ENCODE measurements at regions of chr12 and their contacts with region 1.

Region 1: GRCh38 chr12:56189176-56189917 is at the start of gene SMARCC2:
- DNase-seq: peak; percentile 77 to 88
- ATAC-seq: peak; percentile 90
- H3K4me3 ChIP-seq: peak within 1 kb of the TSS; percentile 76 to 90 (median 82)
- H3K27ac ChIP-seq: peak within 1 kb of the TSS; percentile 89 to 94 (median 94)
- H3K4me1 ChIP-seq: peaks cover 16 to 28% of the 10 kb centered on the region in 2 donors
- H3K27me3 ChIP-seq: no peaks in the 10 kb centered on the region
- CTCF ChIP-seq: peak; percentile 74 to 88 (median 84)
- POLR2A ChIP-seq: peak; percentile 20 to 41
- total RNA-seq, gene SMARCC2: 34.1 to 56.9 (median 49.4) TPM

Region 2: GRCh38 chr12:55112378-55112777 is 1077.0 kb before region 1 on chr12:
- in situ Hi-C with region 1: no loop called
- intact Hi-C with region 1: no loop called
- DNase-seq: no peak
- ATAC-seq: no peak
- H3K4me3 ChIP-seq: no peak overlapping the region
- H3K27ac ChIP-seq: no peak overlapping the region
- H3K4me1 ChIP-seq: no peaks in the 10 kb centered on the region
- H3K27me3 ChIP-seq: no peaks in the 10 kb centered on the region
- CTCF ChIP-seq: no peak
- POLR2A ChIP-seq: no peak

Region 3: GRCh38 chr12:56127888-56128669 is 61.3 kb before region 1 on chr12 and contains the start of gene ESYT1:
- in situ Hi-C with region 1: loop called in 3 of 4 experiments (anchors 5 to 10 kb)
- intact Hi-C with region 1: loop called (anchors 1 kb)
- DNase-seq: peak; percentile 99 to 100
- ATAC-seq: peak; percentile 87
- H3K4me3 ChIP-seq: peak within 1 kb of the TSS; percentile 71 to 95 (median 88)
- H3K27ac ChIP-seq: peak within 1 kb of the TSS; percentile 92 to 99 (median 98)
- H3K4me1 ChIP-seq: peaks cover 44 to 51% of the 10 kb centered on the region in 2 donors
- H3K27me3 ChIP-seq: no peaks in the 10 kb centered on the region
- CTCF ChIP-seq: peak in 1 of 5 experiments; percentile 13
- POLR2A ChIP-seq: peak; percentile 98 to 99
- total RNA-seq, gene ESYT1: 45.9 to 77.7 (median 62.1) TPM

Region 4: DNA sequence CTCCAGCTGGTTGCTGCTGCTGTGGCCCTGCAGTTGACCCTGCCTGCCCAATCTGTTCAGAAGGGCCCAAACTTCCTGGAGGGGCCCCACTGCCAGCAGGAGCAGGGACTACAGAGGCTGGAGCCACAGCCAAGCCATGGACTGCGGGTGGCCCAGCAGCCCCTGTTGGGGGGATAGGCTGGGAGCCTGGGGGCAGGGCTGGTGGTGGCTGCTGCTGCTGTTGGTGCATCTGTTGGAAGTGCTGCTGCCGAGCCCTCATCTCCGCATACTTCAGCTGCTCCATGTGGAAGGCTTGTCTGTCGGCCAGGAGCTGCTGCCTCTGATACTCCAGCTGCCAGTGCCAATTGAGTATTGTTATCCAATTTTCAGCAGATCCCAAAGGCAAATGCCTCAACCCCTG is 24.0 kb before region 1 on chr12:
- in situ Hi-C with region 1: no loop called
- intact Hi-C with region 1: loop called (anchors 2 kb)
- DNase-seq: no peak
- ATAC-seq: peak in 1 of 2 donors; percentile 13
- H3K4me3 ChIP-seq: no peak overlapping the region
- H3K27ac ChIP-seq: peak overlapping the region in 3 of 4 donors; percentile 24 to 64 (median 35)
- H3K4me1 ChIP-seq: peaks cover 15 to 18% of the 10 kb centered on the region in 2 donors
- H3K27me3 ChIP-seq: no peaks in the 10 kb centered on the region
- CTCF ChIP-seq: no peak
- POLR2A ChIP-seq: no peak

Region 5: GRCh38 chr12:56229916-56230431 is 40.6 kb after region 1 on chr12 and contains the start of gene SLC39A5:
- in situ Hi-C with region 1: loop called in 1 of 4 experiments (anchors 5 kb)
- intact Hi-C with region 1: no loop called
- DNase-seq: no peak
- ATAC-seq: no peak
- H3K4me3 ChIP-seq: no peak within 1 kb of the TSS
- H3K27ac ChIP-seq: no peak within 1 kb of the TSS
- H3K4me1 ChIP-seq: peaks cover 3 to 6% of the 10 kb centered on the region in 2 donors
- H3K27me3 ChIP-seq: no peaks in the 10 kb centered on the region
- CTCF ChIP-seq: no peak
- POLR2A ChIP-seq: no peak
- total RNA-seq, gene SLC39A5: 0.83 TPM in 1 of 4 donors, not detected in the others

Region 6: GRCh38 chr12:56299853-56300643 is 110.7 kb after region 1 on chr12 and contains the start of gene CS:
- in situ Hi-C with region 1: no loop called
- intact Hi-C with region 1: loop called (anchors 1 kb)
- DNase-seq: peak; percentile 99
- ATAC-seq: peak; percentile 82 to 94
- H3K4me3 ChIP-seq: peak within 1 kb of the TSS; percentile 74 to 95 (median 86)
- H3K27ac ChIP-seq: peak within 1 kb of the TSS; percentile 91 to 97 (median 94)
- H3K4me1 ChIP-seq: peaks cover 66 to 71% of the 10 kb centered on the region in 2 donors
- H3K27me3 ChIP-seq: no peaks in the 10 kb centered on the region
- CTCF ChIP-seq: peak in 1 of 5 experiments; percentile 29
- POLR2A ChIP-seq: peak; percentile 86 to 92
- total RNA-seq, gene CS: 211 to 359 (median 271) TPM

Region 7: DNA sequence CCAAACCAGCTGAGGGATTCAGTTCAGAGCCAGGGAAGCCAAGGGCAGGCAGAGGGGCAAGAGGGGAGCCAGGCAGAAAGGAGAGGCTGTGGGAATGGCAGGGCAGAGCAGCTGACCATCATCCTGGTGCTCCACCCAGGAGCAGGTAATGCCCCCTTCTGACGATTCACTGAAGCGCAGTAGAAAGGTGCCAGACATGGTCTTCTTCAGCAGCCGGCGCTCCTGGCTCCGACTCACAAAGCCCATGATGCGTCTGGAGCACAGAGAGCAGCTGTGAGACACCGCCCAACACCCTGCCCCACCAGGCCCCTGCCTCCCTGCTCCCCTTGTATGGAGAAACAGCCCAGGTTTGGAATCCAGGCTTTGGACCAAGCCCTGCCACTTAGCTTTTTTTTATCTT is 157.4 kb after region 1 on chr12:
- in situ Hi-C with region 1: no loop called
- intact Hi-C with region 1: no loop called
- DNase-seq: no peak
- ATAC-seq: peak in 1 of 2 donors; percentile 55
- H3K4me3 ChIP-seq: no peak overlapping the region
- H3K27ac ChIP-seq: no peak overlapping the region
- H3K4me1 ChIP-seq: no peaks in the 10 kb centered on the region
- H3K27me3 ChIP-seq: no peaks in the 10 kb centered on the region
- CTCF ChIP-seq: no peak
- POLR2A ChIP-seq: no peak